ENCODE measurements at regions of chr2 and their contacts with region 1.

Region 1: DNA sequence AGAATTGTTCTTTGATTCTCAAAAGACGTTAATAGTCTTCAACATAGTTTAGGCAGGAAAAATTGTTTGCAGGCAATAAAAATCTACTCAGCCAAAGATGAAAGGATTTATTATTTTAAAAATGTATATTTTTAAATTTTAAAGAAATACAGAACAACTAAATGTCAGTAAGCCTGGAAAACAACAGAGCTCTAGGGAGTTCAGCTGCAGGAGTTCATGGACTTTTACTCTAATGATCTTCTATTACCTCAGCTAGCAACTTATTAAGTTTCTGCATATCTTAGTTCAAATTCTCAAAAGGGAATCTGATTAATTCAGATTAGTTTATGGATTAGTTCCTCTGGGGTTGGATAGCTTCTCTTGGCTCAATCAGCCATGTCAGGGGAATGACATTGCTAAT is 17.9 kb upstream of the XIRP2 start:
- DNase-seq: no peak
- ATAC-seq: no peak
- H3K4me3 ChIP-seq: no peak overlapping the region
- H3K4me3 Mint-ChIP-seq: no peak overlapping the region
- H3K27ac ChIP-seq: no peak overlapping the region
- H3K27ac Mint-ChIP-seq: no peak overlapping the region
- H3K4me1 ChIP-seq: no peaks in the 10 kb centered on the region
- H3K4me1 Mint-ChIP-seq: no peaks in the 10 kb centered on the region
- H3K27me3 ChIP-seq: no peaks in the 10 kb centered on the region
- H3K27me3 Mint-ChIP-seq: no peaks in the 10 kb centered on the region
- CTCF ChIP-seq: no peak

Region 2: DNA sequence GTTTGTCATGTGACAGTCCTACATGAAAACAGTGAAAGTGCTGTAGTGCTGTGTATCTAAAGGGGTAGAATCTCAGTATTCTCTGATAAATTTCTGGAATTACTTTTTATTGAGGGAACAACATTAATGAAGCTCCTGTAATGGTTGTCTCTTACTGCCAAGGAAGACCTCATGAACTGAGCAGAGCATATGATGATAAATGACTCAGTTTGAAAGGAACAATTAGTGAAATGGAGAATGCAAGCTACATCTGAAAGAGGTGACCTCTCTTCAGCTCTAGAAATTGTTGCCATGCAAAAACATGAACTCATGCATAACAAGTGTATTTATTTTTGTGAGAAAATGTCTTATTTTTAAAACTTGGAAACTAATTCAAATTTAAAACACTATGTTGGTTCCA is 588.2 kb before region 1 on chr2:
- CTCF ChIA-PET with region 1: no interaction called
- POLR2A ChIA-PET with region 1: no interaction called
- intact Hi-C with region 1: loop called in 1 of 2 experiments (anchors 10 kb)
- DNase-seq: no peak
- ATAC-seq: no peak
- H3K4me3 ChIP-seq: no peak overlapping the region
- H3K4me3 Mint-ChIP-seq: no peak overlapping the region
- H3K27ac ChIP-seq: no peak overlapping the region
- H3K27ac Mint-ChIP-seq: no peak overlapping the region
- H3K4me1 ChIP-seq: no peaks in the 10 kb centered on the region
- H3K4me1 Mint-ChIP-seq: no peaks in the 10 kb centered on the region
- H3K27me3 ChIP-seq: no peaks in the 10 kb centered on the region
- H3K27me3 Mint-ChIP-seq: no peaks in the 10 kb centered on the region
- CTCF ChIP-seq: no peak

Region 3: DNA sequence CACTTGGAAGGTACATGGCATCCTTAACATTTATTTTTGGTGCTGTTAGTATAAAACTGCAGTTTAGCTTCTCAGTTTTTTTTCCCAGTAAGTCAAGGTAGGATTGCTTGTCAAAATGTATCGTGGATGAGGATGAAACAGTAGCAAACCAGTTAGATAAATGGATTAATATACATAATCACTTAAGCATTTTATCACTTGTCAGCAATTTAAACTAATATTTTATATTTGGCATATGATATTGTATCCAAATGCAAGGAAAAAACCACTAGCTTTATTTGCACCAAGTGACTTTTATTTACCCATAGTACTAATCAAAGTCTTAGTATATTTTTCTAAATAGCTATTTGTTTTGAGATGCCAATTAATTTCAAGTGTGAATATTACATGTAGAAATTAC is 119.7 kb before region 1 on chr2:
- CTCF ChIA-PET with region 1: no interaction called
- POLR2A ChIA-PET with region 1: no interaction called
- intact Hi-C with region 1: no loop called
- DNase-seq: no peak
- ATAC-seq: no peak
- H3K4me3 ChIP-seq: no peak overlapping the region
- H3K4me3 Mint-ChIP-seq: no peak overlapping the region
- H3K27ac ChIP-seq: no peak overlapping the region
- H3K27ac Mint-ChIP-seq: no peak overlapping the region
- H3K4me1 ChIP-seq: no peaks in the 10 kb centered on the region
- H3K4me1 Mint-ChIP-seq: no peaks in the 10 kb centered on the region
- H3K27me3 ChIP-seq: no peaks in the 10 kb centered on the region
- H3K27me3 Mint-ChIP-seq: no peaks in the 10 kb centered on the region
- CTCF ChIP-seq: no peak

Region 4: GRCh38 chr2:166917415-166917814 is 47.1 kb after region 1 on chr2:
- CTCF ChIA-PET with region 1: no interaction called
- POLR2A ChIA-PET with region 1: no interaction called
- intact Hi-C with region 1: no loop called
- DNase-seq: no peak
- ATAC-seq: no peak
- H3K4me3 ChIP-seq: no peak overlapping the region
- H3K4me3 Mint-ChIP-seq: no peak overlapping the region
- H3K27ac ChIP-seq: no peak overlapping the region
- H3K27ac Mint-ChIP-seq: no peak overlapping the region
- H3K4me1 ChIP-seq: no peaks in the 10 kb centered on the region
- H3K4me1 Mint-ChIP-seq: no peaks in the 10 kb centered on the region
- H3K27me3 ChIP-seq: no peaks in the 10 kb centered on the region
- H3K27me3 Mint-ChIP-seq: no peaks in the 10 kb centered on the region
- CTCF ChIP-seq: no peak